Mucosa of descending colon (tissue), 3 donors: ENCODE measurements at regions of chr3 and their contacts with region 1.

Region 1: GRCh38 chr3:87350364-87351199 is 74.2 kb upstream of the POU1F1 start:
- DNase-seq: peak in 1 of 3 donors; percentile 25
- ATAC-seq: peak; percentile 87
- H3K4me3 ChIP-seq: no peak overlapping the region
- H3K4me1 ChIP-seq: peaks cover 4% of the 10 kb centered on the region
- CTCF ChIP-seq: peak; percentile 80

Region 2: DNA sequence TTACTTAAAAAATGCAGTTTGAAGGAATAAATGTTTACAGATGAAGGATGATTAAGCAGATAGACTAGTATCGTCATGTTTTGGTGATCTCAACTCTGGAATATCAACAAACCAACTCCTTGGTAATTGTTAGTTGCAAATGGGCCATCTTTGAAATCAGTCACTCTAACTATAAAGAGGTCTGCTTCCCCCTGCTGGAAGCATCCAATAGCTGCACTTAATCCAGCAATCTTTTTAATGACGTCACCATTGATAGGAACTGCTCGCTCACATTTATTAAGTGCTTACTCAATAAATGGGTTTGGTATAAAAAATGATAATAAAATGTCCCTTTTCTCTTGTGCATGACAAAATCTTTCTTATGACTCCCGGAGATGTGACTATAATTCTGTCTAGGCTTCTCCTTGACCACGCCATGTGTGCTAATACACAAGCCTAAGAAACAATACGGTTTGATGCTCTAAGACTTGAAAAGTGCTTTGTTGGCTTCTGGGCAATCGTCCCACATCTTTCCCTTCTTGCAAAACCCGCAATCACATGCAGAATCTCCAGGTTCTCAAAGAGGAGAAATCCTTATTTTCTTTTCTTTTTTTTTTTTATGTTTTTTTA is 153.4 kb after region 1 on chr3:
- intact Hi-C with region 1: loop called in 1 of 2 experiments (anchors 5 kb)
- DNase-seq: peak in 1 of 3 donors; percentile 41
- ATAC-seq: peak; percentile 80
- H3K4me3 ChIP-seq: no peak overlapping the region
- H3K4me1 ChIP-seq: no peaks in the 10 kb centered on the region
- CTCF ChIP-seq: peak; percentile 12